ENCODE measurements at regions of chr1 and their contacts with region 1.

Region 1: GRCh38 chr1:110087812-110088738 is 17.6 kb upstream of the ALX3 start:
- DNase-seq: peak; percentile 20
- H3K4me3 ChIP-seq: no peak overlapping the region
- H3K27ac ChIP-seq: no peak overlapping the region
- H3K27me3 ChIP-seq: peaks cover 73% of the 10 kb centered on the region
- CTCF ChIP-seq: peak; percentile 72

Region 2: DNA sequence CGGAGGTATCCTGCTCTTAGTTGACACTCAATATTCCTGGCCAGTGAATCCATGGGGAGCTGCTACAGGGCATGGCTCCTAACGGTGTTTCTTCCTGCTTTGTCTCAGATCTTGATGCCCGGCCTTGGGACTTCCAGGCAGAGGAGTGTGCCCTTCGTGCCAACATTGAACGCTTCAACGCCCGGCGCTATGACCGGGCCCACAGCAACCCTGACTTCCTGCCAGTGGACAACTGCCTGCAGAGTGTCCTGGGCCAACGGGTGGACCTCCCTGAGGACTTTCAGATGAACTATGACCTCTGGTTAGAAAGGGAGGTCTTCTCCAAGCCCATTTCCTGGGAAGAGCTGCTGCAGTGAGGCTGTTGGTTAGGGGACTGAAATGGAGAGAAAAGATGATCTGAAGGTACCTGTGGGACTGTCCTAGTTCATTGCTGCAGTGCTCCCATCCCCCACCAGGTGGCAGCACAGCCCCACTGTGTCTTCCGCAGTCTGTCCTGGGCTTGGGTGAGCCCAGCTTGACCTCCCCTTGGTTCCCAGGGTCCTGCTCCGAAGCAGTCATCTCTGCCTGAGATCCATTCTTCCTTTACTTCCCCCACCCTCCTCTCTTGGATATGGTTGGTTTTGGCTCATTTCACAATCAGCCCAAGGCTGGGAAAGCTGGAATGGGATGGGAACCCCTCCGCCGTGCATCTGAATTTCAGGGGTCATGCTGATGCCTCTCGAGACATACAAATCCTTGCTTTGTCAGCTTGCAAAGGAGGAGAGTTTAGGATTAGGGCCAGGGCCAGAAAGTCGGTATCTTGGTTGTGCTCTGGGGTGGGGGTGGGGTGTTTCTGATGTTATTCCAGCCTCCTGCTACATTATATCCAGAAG is 34.3 kb before region 1 on chr1:
- CTCF ChIA-PET with region 1: interaction called, 22 read pairs
- POLR2A ChIA-PET with region 1: no interaction called
- DNase-seq: no peak
- H3K4me3 ChIP-seq: no peak overlapping the region
- H3K27ac ChIP-seq: no peak overlapping the region
- H3K27me3 ChIP-seq: no peaks in the 10 kb centered on the region
- CTCF ChIP-seq: peak; percentile 98

Region 3: DNA sequence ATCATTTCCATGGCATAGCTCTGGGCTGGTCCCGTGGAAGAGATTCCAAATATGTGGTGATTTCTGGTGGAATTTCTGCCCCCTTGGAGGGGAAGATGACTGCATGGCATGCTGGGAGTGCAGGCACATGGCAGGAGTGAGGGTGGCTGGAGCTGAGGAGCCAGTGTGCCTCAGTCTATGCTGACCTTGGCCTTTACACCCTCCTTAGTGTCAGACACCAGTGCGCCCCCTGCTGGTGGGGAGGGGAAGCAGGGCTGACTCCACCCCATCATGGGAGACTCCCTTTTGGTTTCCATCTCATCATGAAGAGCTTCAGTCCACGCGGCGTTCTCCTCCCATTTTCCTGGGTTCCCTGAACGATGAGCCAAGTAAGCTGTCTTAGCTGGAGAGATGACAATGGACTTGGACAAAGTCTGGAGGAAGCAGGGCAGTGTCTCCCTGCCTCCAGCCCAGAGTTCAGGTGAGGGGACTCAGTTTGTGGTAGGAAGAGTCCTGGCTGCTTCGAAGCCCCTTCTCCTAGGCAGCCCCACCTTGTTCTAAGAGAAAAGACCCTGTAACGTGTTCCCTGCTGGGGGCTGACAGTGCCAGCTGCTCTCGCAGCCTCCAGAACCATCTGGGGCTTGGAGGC is 27.9 kb before region 1 on chr1:
- CTCF ChIA-PET with region 1: interaction called, 22 read pairs
- POLR2A ChIA-PET with region 1: no interaction called
- DNase-seq: no peak
- H3K4me3 ChIP-seq: no peak overlapping the region
- H3K27ac ChIP-seq: no peak overlapping the region
- H3K27me3 ChIP-seq: no peaks in the 10 kb centered on the region
- CTCF ChIP-seq: peak; percentile 73

Region 4: GRCh38 chr1:110076789-110077500 is 11.1 kb before region 1 on chr1:
- CTCF ChIA-PET with region 1: interaction called, 19 read pairs
- POLR2A ChIA-PET with region 1: no interaction called
- DNase-seq: no peak
- H3K4me3 ChIP-seq: no peak overlapping the region
- H3K27ac ChIP-seq: no peak overlapping the region
- H3K27me3 ChIP-seq: peaks cover 75% of the 10 kb centered on the region
- CTCF ChIP-seq: no peak

Region 5: DNA sequence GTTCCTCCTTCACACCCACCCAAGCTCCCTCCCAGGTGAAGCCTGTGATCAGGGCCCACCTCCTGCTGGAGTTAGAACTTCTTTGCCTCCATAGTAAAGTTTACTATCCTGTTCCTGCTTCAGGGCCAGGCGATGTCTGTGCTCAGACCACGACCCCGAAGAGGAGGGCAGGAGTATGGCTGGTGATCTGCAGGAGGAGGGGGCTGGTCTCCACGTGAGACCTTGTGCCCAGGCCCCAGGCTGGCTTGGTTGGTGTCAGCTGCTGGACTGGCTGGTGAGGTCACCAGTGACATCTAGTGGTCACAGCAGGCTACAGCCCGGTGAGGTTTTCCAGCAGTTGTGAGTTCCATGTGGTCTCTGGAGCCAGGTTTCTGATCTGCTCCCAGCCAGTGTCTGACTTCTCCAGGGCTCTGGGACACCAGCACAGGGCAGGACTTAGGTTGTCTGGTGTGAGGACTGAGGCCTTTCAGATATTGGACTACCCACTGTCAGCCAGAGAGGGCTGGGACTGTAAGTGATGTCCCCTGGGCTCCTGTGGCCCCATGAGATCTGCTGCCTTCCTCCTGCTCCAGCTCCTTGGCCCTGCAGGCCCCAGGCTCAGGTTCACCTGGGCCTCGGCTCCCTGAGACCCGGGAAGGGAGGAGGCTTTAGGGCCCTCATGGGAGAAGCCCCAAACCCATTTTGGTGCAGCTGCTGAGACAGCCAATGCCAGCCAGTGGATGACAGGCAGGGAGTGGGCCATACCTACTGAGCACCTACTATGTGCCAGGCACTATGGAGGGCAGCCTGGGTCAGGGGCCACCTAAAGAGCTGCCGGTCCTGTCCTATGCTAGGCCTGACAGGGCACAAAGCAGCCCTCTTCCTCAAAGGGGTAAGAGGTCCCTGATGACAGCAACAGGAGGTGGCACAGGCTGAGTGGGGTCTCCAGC is 18.2 kb after region 1 on chr1:
- CTCF ChIA-PET with region 1: interaction called, 180 read pairs
- POLR2A ChIA-PET with region 1: no interaction called
- DNase-seq: peak; percentile 43
- H3K4me3 ChIP-seq: no peak overlapping the region
- H3K27ac ChIP-seq: no peak overlapping the region
- H3K27me3 ChIP-seq: peaks cover 40% of the 10 kb centered on the region
- CTCF ChIP-seq: peak; percentile 98

Region 6: DNA sequence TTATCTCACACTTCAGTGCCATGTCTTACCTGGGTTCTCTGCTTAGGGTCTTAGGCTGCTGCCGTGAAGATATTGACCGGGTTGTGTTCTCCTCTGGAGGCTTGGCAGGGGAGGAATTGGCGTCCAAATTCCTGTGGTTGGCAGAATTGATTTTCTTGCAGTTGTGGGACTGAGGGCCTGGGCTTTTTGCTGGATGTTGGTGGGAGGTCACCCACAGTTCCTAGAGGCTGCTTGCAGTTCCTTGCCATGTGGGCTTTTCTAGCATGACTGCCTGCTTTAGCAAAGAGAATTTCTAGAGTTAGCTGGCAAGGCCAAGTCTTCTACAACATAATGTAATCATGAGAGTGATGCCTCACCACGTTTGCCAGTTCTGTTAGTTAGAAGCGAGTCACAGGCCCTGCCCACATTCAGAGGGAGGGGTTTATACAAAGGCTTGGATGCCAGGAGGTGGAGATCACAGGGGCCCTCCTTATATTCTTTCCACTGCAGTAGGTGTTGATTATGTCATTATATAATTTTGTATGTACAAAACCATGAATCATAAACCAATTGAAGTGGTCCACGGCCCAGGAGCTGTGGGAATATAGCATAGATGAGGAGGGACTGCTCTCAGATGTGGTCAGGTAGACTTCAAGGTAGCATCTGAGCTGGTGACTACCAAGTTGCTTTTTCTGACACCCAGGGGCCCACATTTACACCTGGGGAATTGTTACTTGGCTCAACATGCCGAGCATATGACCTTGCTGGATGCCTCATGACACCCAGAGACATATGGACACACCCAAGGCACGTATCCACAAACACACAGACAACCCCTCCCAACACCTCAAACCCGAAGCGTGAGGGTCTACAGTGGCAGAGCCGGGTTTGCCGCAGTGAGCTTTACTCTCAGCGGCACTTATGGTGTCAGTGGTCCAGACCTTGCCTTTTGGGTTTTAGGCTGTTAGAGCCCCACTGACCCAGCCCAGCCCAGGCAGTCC is 30.9 kb after region 1 on chr1:
- CTCF ChIA-PET with region 1: interaction called, 24 read pairs
- POLR2A ChIA-PET with region 1: no interaction called
- DNase-seq: no peak
- H3K4me3 ChIP-seq: no peak overlapping the region
- H3K27ac ChIP-seq: no peak overlapping the region
- H3K27me3 ChIP-seq: peaks cover 23% of the 10 kb centered on the region
- CTCF ChIP-seq: no peak

Measured in AG04450 (cell line).